AG04450 (cell line): ENCODE measurements at regions of chr2 and their contacts with region 1.

Region 1: GRCh38 chr2:20091305-20091991 is 40.0 kb upstream of the LAPTM4A start:
- DNase-seq: peak; percentile 86
- H3K4me3 ChIP-seq: peak overlapping the region; percentile 23
- H3K27ac ChIP-seq: peak overlapping the region; percentile 98
- H3K27me3 ChIP-seq: no peaks in the 10 kb centered on the region
- CTCF ChIP-seq: no peak

Region 2: GRCh38 chr2:20051532-20052228 is 39.8 kb before region 1 on chr2 and contains the start of gene LAPTM4A:
- CTCF ChIA-PET with region 1: interaction called, 16 read pairs
- POLR2A ChIA-PET with region 1: interaction called, 33 read pairs
- DNase-seq: peak; percentile 100
- H3K4me3 ChIP-seq: peak within 1 kb of the TSS; percentile 97
- H3K27ac ChIP-seq: peak within 1 kb of the TSS; percentile 100
- H3K27me3 ChIP-seq: no peaks in the 10 kb centered on the region
- CTCF ChIP-seq: 0 out of 2 replicates have a peak, but pooled peaks have one; percentile 10
- polyA plus RNA-seq, gene LAPTM4A: 1,309 and 1,416 TPM in 2 replicates

Region 3: GRCh38 chr2:20062615-20063545 is 28.6 kb before region 1 on chr2:
- CTCF ChIA-PET with region 1: interaction called, 6 read pairs
- POLR2A ChIA-PET with region 1: interaction called, 29 read pairs
- DNase-seq: peak; percentile 96
- H3K4me3 ChIP-seq: no peak overlapping the region
- H3K27ac ChIP-seq: peak overlapping the region; percentile 95
- H3K27me3 ChIP-seq: no peaks in the 10 kb centered on the region
- CTCF ChIP-seq: peak; percentile 41

Region 4: DNA sequence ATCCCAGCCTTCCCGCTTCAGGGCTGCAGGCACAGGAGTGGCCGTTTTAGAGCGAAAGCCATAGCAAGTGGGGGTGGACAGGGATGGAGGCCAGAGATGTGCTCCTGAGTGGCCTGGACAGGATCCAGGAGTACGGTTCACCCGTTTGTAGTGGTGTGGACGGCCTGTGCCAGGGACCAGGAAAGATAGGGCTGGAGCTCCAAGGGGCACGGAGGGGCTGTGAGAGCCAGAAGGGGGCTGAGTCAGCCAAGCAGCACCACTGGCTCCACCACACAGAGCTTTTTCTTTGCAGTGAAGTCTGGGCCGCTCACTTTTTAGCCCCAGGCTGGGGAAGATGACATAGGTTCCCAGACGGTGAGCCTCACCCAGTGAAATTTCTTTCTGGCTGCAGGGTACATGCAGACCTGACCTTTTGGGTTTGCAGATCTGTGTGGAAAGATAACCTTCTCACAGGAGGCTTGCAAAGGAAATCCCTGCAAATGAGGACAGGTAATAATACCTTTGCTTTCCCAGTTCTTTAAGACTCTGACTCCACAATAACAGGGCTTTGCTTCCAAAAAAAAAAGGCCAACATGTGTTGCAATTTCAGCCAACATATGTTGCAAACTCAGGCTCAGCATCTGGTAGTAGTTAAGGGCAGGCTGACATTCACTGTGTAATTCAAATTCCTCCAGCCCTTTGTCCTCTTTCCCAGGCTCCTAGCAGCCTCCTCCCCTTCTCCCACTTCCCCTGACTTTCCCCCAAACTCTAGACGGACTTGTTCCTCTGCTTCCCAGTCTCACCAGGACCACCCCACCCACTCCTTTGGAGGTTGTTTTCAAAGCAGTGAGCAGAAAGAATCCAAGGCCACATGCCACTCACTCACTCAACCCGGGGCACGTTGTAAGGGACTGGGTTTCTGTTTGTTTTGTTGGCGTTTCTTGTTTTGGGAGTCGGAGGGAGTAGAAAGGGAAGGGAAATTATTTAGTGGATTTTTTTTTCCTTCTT is 19.8 kb before region 1 on chr2:
- CTCF ChIA-PET with region 1: interaction called, 3 read pairs
- POLR2A ChIA-PET with region 1: interaction called, 20 read pairs
- DNase-seq: peak; percentile 97
- H3K4me3 ChIP-seq: peak overlapping the region; percentile 36
- H3K27ac ChIP-seq: peak overlapping the region; percentile 100
- H3K27me3 ChIP-seq: no peaks in the 10 kb centered on the region
- CTCF ChIP-seq: no peak

Region 5: DNA sequence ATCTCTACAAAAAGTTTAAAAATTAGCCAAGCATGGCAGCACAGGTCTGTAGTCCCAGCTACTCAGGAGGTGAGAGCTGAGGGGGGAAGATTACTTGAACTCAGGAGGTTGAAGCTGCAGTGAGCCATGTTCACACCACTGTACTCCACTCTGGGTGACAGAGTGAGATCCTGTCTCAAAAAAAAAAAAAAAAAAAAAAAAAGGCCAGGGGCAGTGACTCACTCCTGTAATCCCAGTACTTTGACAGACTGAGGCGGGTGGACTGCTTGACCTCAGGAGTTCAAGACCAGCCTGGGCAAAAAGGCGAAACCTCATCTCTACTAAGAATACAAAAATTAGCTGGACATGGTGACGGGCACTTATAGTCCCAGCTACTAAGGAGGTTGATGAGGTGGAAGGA is 222.2 kb after region 1 on chr2:
- CTCF ChIA-PET with region 1: no interaction called
- POLR2A ChIA-PET with region 1: interaction called, 10 read pairs
- DNase-seq: no peak
- H3K4me3 ChIP-seq: no peak overlapping the region
- H3K27ac ChIP-seq: no peak overlapping the region
- H3K27me3 ChIP-seq: no peaks in the 10 kb centered on the region
- CTCF ChIP-seq: no peak